ENCODE measurements at regions of chr1 and their contacts with region 1.

Region 1: GRCh38 chr1:176897350-176898236 is 266.9 kb downstream of the ASTN1 start:
- DNase-seq: peak; percentile 49
- H3K4me3 ChIP-seq: peak overlapping the region in 1 of 3 experiments; percentile 37
- H3K27ac ChIP-seq: no peak overlapping the region
- H3K4me1 ChIP-seq: peaks cover 4% of the 10 kb centered on the region
- H3K27me3 ChIP-seq: no peaks in the 10 kb centered on the region
- CTCF ChIP-seq: peak; percentile 79 to 89
- POLR2A ChIP-seq: no peak

Region 2: GRCh38 chr1:176938375-176938774 is 40.8 kb after region 1 on chr1:
- CTCF ChIA-PET with region 1: no interaction called
- POLR2A ChIA-PET with region 1: no interaction called
- dilution Hi-C with region 1: no loop called
- intact Hi-C with region 1: no loop called
- DNase-seq: no peak
- H3K4me3 ChIP-seq: no peak overlapping the region
- H3K27ac ChIP-seq: no peak overlapping the region
- H3K4me1 ChIP-seq: no peaks in the 10 kb centered on the region
- H3K27me3 ChIP-seq: no peaks in the 10 kb centered on the region
- CTCF ChIP-seq: no peak
- POLR2A ChIP-seq: no peak

Region 3: GRCh38 chr1:176976225-176976624 is 78.6 kb after region 1 on chr1:
- CTCF ChIA-PET with region 1: no interaction called
- POLR2A ChIA-PET with region 1: no interaction called
- dilution Hi-C with region 1: no loop called
- intact Hi-C with region 1: no loop called
- DNase-seq: no peak
- H3K4me3 ChIP-seq: no peak overlapping the region
- H3K27ac ChIP-seq: no peak overlapping the region
- H3K4me1 ChIP-seq: no peaks in the 10 kb centered on the region
- H3K27me3 ChIP-seq: no peaks in the 10 kb centered on the region
- CTCF ChIP-seq: no peak
- POLR2A ChIP-seq: no peak

Region 4: DNA sequence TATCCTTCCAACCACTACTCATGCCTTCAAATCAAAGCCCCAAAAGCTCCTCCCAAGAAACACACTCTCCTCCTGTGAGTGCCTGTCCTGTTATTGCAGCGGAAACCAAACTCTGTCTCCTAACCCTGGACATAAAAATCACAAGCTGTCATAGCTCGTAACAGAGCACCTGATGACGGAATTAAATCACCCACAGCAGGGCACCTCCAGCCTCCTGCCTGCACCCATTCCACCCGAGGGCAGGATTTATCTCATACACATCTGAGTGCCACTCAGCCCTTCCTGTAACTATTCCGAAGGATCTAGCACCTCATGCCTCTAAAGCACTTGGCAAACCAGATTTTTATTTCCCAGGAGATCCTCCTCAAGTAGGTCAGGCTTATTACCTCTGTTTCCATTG is 166.1 kb after region 1 on chr1:
- CTCF ChIA-PET with region 1: no interaction called
- POLR2A ChIA-PET with region 1: no interaction called
- dilution Hi-C with region 1: no loop called
- intact Hi-C with region 1: no loop called
- DNase-seq: no peak
- H3K4me3 ChIP-seq: no peak overlapping the region
- H3K27ac ChIP-seq: no peak overlapping the region
- H3K4me1 ChIP-seq: no peaks in the 10 kb centered on the region
- H3K27me3 ChIP-seq: no peaks in the 10 kb centered on the region
- CTCF ChIP-seq: no peak
- POLR2A ChIP-seq: no peak

Region 5: GRCh38 chr1:177181631-177182291 is 284.2 kb after region 1 on chr1:
- CTCF ChIA-PET with region 1: interaction called, 15 read pairs
- POLR2A ChIA-PET with region 1: no interaction called
- dilution Hi-C with region 1: no loop called
- intact Hi-C with region 1: loop called (anchors 1 kb)
- DNase-seq: peak; percentile 41
- H3K4me3 ChIP-seq: peak overlapping the region in 1 of 3 experiments; percentile 19
- H3K27ac ChIP-seq: no peak overlapping the region
- H3K4me1 ChIP-seq: peaks cover 3% of the 10 kb centered on the region
- H3K27me3 ChIP-seq: peaks cover 3 to 10% of the 10 kb centered on the region in 2 experiments
- CTCF ChIP-seq: peak; percentile 59 to 80
- POLR2A ChIP-seq: no peak

Region 6: DNA sequence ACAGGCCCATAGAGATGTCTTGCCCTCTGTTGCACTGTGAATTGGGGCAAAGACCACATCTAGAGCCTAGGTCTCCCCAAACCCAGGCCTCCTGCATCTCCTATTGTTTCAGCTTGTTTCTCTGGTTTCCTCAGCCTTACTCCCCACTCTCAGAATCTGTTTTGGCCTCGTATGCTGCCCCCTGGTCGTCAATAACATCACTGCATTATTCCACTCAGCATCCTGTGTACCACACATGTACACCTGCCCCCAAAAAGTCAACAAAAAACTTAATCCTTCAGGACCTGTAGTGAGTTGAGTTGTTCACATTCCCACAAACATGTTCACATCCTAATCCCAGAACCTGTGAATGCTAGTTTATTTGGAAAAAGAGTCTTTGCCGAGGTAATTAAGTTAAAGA is 458.0 kb after region 1 on chr1:
- CTCF ChIA-PET with region 1: interaction called, 5 read pairs
- POLR2A ChIA-PET with region 1: no interaction called
- dilution Hi-C with region 1: no loop called
- intact Hi-C with region 1: loop called (anchors 2 kb)
- DNase-seq: peak; percentile 6
- H3K4me3 ChIP-seq: no peak overlapping the region
- H3K27ac ChIP-seq: no peak overlapping the region
- H3K4me1 ChIP-seq: no peaks in the 10 kb centered on the region
- H3K27me3 ChIP-seq: no peaks in the 10 kb centered on the region
- CTCF ChIP-seq: peak; percentile 12 to 21
- POLR2A ChIP-seq: no peak

Region 7: DNA sequence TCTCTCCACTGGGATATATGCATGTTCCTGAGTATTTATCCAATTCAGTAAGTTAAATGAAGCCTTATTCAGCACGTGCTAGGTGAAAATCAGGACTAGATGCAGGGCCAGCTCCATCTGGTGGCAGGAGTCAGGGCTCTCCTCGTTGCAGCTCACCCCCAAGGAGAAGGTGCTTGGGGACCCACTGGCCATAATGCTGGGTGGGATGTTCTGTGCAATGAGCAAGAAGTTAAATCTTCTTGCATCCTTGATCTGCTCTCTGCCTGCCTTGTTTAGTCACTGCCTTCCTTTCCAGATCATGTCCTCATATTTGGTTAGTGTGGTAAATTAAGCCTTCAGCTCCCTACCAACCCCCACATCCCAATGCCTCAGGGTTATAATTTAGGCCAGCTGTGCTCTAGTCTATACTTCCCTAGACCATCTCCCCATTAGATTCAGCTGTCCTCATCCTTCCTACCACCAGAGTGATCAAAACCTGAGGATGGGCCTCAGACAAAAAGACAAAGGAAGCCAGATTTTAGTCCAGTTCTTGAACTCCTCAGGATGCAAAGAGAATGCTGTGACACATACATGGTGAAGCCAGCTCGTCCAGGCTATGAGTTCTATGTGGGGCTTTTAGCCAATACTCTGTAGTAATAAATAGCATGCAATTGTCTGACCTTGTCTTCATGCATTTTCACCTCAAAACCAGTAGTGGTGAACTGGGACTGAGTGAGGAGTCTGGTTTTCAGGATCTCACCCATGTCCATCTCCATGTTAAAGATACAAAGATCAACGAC is 1016.4 kb after region 1 on chr1:
- CTCF ChIA-PET with region 1: interaction called, 30 read pairs
- POLR2A ChIA-PET with region 1: no interaction called
- dilution Hi-C with region 1: no loop called
- intact Hi-C with region 1: no loop called
- DNase-seq: peak; percentile 29
- H3K4me3 ChIP-seq: no peak overlapping the region
- H3K27ac ChIP-seq: no peak overlapping the region
- H3K4me1 ChIP-seq: no peaks in the 10 kb centered on the region
- H3K27me3 ChIP-seq: peaks cover 3 to 4% of the 10 kb centered on the region in 2 experiments
- CTCF ChIP-seq: peak; percentile 26 to 35
- POLR2A ChIP-seq: no peak

Region 8: DNA sequence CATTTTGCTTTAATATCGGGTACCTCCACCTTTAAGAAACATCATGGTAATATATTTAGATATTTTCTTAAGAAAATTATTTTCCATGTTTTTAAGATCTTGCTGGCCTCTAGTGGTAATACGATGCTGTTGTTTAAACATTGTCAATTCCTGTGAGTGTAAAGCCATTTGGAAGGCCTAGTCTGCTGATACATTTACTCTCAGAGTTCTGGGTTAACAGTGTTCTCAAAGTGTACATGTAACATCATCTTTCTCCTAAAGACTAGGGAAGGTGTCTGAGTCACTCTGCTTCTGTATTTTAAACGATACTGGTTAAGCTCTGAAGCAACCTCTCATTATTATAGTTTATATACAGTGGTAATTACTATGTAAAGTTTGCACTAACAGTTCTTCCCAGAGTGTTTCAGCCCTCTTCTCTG is 1385.4 kb after region 1 on chr1:
- CTCF ChIA-PET with region 1: interaction called, 3 read pairs
- POLR2A ChIA-PET with region 1: no interaction called
- dilution Hi-C with region 1: no loop called
- intact Hi-C with region 1: loop called (anchors 10 kb)
- DNase-seq: peak; percentile 69
- H3K4me3 ChIP-seq: no peak overlapping the region
- H3K27ac ChIP-seq: no peak overlapping the region
- H3K4me1 ChIP-seq: no peaks in the 10 kb centered on the region
- H3K27me3 ChIP-seq: no peaks in the 10 kb centered on the region
- CTCF ChIP-seq: peak; percentile 28 to 34
- POLR2A ChIP-seq: no peak